ENCODE measurements at regions of chrX and their contacts with region 1.

Region 1: GRCh38 chrX:10189317-10190268 is 32.8 kb downstream of the CLCN4 start:
- DNase-seq: peak; percentile 59 to 82 (median 74)
- ATAC-seq: peak; percentile 90
- H3K4me3 ChIP-seq: no peak overlapping the region
- H3K27ac ChIP-seq: no peak overlapping the region
- H3K4me1 ChIP-seq: no peaks in the 10 kb centered on the region
- H3K27me3 ChIP-seq: no peaks in the 10 kb centered on the region
- CTCF ChIP-seq: peak; percentile 36 to 86 (median 66)
- POLR2A ChIP-seq: no peak

Region 2: DNA sequence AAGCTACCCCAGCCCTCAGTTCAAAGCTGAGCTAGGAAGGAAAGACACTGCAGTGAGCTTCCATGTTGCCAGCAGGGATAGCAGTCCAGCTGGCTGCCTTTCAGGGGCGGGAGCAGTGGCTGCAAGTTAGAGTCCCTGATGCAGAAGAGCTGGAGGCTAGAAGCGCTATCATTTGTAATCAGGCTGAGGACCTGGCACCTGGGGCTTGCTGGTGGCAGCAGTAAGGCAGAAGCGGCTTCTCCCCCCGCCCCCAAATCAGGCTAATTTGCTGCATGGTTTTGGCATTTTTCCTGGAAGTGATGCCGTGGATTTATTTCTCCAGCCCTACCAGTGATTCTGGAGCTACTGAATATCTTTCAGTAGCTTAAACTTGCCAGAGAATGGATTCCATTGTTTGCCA is 170.5 kb after region 1 on chrX:
- intact Hi-C with region 1: no loop called
- DNase-seq: no peak
- ATAC-seq: no peak
- H3K4me3 ChIP-seq: no peak overlapping the region
- H3K27ac ChIP-seq: no peak overlapping the region
- H3K4me1 ChIP-seq: no peaks in the 10 kb centered on the region
- H3K27me3 ChIP-seq: no peaks in the 10 kb centered on the region
- CTCF ChIP-seq: no peak
- POLR2A ChIP-seq: no peak

Region 3: GRCh38 chrX:10636337-10636736 is 446.7 kb after region 1 on chrX:
- intact Hi-C with region 1: loop called (anchors 10 kb)
- DNase-seq: peak; percentile 15 to 52 (median 35)
- ATAC-seq: peak; percentile 64
- H3K4me3 ChIP-seq: no peak overlapping the region
- H3K27ac ChIP-seq: no peak overlapping the region
- H3K4me1 ChIP-seq: no peaks in the 10 kb centered on the region
- H3K27me3 ChIP-seq: no peaks in the 10 kb centered on the region
- CTCF ChIP-seq: peak in 5 of 7 experiments; percentile 36 to 70 (median 62)
- POLR2A ChIP-seq: no peak

Region 4: DNA sequence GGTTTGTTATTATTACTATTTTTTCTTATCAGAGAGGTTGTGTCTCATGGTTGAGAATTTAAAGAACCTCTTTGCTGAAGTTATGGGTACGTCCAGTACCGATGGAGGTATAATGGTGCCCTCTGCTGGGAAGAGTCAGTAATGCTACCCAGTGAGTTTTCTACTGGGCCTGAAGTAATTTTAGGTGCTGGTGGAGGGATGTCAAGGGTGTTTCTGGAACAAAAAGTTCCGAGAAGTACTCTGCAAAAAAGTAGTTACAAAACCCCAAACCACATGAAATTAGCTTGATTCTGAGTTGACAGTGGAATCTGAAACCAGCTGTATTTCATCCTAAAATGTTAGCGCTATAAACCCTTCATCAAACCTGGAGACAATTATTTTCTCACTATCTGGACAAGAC is 533.3 kb after region 1 on chrX:
- intact Hi-C with region 1: loop called (anchors 10 kb)
- DNase-seq: peak; percentile 59 to 71 (median 59)
- ATAC-seq: peak; percentile 52
- H3K4me3 ChIP-seq: no peak overlapping the region
- H3K27ac ChIP-seq: no peak overlapping the region
- H3K4me1 ChIP-seq: no peaks in the 10 kb centered on the region
- H3K27me3 ChIP-seq: no peaks in the 10 kb centered on the region
- CTCF ChIP-seq: peak; percentile 28 to 72 (median 57)
- POLR2A ChIP-seq: no peak

Region 5: DNA sequence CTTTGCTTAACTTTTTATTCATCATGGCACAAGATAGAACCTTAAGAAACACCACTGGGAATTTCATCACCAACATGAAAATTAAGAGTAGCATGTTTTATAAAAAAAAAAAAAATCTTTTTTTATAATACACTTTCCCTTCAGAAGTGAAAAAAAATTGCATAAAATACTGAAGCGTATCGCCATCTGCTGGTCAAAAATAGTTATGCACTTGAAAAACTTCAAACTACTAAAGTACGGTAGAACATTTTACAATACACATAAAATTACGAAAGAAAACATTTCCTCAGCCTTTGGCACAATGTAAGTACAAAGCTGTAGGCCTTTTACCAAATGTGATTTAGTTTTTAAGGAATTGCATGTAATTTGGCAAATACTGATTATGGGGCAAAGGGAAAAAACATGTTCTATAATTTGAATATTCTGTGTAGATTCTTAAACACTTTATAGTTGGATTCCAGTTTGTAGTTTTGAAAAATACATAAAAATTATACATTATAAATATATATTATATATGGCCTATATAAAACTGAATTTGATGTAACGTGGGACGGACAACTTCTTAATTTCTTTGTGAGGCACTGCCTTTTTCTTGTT is 948.0 kb after region 1 on chrX:
- intact Hi-C with region 1: loop called (anchors 10 kb)
- DNase-seq: no peak
- ATAC-seq: no peak
- H3K4me3 ChIP-seq: no peak overlapping the region
- H3K27ac ChIP-seq: no peak overlapping the region
- H3K4me1 ChIP-seq: no peaks in the 10 kb centered on the region
- H3K27me3 ChIP-seq: no peaks in the 10 kb centered on the region
- CTCF ChIP-seq: peak; percentile 38 to 71 (median 53)
- POLR2A ChIP-seq: no peak